ENCODE measurements at regions of chr13 and their contacts with region 1.

Region 1: GRCh38 chr13:28031220-28031895 is 42.9 kb upstream of the URAD start:
- DNase-seq: peak; percentile 59
- CTCF ChIP-seq: no peak

Region 2: DNA sequence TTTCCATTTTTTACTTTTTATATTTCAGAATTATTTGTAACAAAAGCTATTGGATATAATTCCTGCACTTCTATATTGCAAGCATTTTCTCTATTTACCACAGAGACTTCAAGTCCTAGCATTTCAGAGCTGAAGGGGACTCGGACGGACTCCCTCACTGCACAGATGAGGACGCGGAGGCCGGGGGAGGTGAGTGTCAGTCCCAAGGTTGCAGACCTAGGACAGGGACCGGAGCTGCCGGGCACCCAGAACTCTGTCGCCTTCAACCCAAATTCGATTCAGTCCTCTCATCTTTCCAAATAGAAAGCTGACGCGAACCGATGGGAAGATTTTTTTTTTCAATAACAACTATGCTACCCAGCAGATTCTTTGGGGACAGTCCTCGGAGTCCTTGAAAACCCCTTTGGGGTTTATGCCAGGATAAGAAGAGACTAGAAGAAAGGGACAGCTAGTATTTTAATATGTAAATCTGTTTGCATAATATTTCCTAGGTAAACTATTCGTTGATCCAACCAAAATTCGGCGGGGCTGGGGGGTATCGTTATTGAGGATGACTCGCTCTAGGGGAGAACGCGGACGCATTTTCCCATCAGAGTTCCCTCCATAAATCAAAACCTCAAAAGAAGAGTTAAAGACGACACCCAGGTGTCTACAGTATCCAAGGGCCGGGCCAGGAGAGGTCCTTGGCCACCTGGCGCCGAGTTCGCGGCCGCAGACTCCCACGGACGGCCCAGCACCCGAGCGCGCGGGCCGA is 68.2 kb after region 1 on chr13:
- in situ Hi-C with region 1: loop called (anchors 10 kb)
- DNase-seq: peak; percentile 38
- CTCF ChIP-seq: no peak

Measured in GM13976 (cell line).